ENCODE measurements at regions of chr2 and their contacts with region 1.

Region 1: DNA sequence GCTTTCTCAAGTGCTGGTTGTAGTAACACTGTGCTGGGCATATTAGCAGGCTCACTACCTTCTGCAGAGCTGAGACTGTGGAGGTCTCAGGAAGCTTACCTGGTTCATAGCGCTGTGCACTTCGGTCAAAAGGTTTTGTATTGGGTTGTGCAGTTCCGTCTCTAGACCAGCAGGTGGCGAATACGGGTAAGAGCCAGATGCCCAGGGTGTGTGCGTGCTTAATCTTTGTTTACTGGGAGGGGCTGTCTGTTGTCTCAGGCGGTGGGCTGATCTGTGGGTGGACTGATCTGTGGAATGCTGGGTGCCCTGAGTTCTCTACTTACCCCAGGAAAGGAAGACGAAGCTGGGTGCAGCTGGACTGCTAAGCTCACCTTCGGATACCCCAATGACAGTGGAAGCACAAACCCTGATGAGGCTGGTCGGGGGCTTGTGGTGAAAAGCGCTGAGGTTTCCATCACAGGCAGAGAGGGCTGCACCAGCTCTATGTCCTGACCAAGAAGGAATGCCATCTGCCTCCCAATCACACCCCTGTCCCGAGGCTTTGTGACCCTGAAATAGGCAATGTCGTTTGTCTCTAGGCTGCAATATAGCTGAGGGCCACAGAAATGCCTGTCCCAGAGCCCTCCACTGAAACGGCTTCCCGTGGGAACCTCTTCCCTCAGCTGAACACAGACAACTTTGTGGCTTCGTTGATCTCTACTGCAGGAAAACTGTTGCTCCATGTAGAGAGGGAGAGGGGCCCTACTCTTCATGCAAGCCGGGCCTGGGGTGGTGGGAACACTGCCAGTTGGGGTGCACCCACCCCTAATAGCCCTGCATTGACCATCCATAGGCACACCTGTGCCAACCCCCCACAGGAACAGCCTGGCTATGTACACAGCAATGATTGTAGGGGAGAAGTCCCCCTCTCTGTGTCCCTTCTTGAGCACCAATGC is 45.9 kb upstream of the FAM117B start:
- DNase-seq: peak; percentile 29 to 52
- ATAC-seq: peak; percentile 85 to 94
- H3K4me3 ChIP-seq: peak overlapping the region; percentile 18 to 60 (median 30)
- H3K27ac ChIP-seq: no peak overlapping the region
- H3K4me1 ChIP-seq: peaks cover 0 to 3% of the 10 kb centered on the region in 2 donors
- H3K27me3 ChIP-seq: no peaks in the 10 kb centered on the region
- CTCF ChIP-seq: peak; percentile 65 to 95 (median 89)
- POLR2A ChIP-seq: no peak

Region 2: DNA sequence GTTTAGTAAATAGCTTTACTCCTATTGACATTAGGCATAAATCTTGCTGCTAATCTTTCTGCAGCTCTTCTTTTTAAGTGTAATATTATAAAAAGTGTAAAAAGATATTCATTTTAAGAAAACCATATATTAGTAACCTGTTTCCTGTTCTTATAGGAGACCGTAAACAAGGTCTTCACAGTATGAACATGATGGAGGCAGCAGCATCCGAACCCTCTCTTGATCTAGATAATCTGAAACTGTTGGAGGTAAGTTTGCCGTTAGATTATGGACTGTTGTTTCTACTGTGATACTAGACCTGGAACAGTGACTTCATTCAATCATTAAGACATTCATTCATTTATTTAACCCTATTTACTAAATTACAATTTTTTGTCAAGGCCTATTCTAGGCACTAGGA is 74.2 kb before region 1 on chr2:
- in situ Hi-C with region 1: no loop called
- intact Hi-C with region 1: no loop called
- DNase-seq: no peak
- ATAC-seq: no peak
- H3K4me3 ChIP-seq: no peak overlapping the region
- H3K27ac ChIP-seq: no peak overlapping the region
- H3K4me1 ChIP-seq: no peaks in the 10 kb centered on the region
- H3K27me3 ChIP-seq: no peaks in the 10 kb centered on the region
- CTCF ChIP-seq: no peak
- POLR2A ChIP-seq: no peak

Region 3: GRCh38 chr2:202726070-202726469 is 137.2 kb after region 1 on chr2:
- in situ Hi-C with region 1: no loop called
- intact Hi-C with region 1: loop called (anchors 5 kb)
- DNase-seq: no peak
- ATAC-seq: peak; percentile 74 to 77
- H3K4me3 ChIP-seq: peak overlapping the region in 2 of 4 donors; percentile 18 to 30
- H3K27ac ChIP-seq: peak overlapping the region in 1 of 4 donors; percentile 63
- H3K4me1 ChIP-seq: peaks cover 0 to 6% of the 10 kb centered on the region in 2 donors
- H3K27me3 ChIP-seq: no peaks in the 10 kb centered on the region
- CTCF ChIP-seq: no peak
- POLR2A ChIP-seq: peak in 1 of 2 donors; percentile 38

Region 4: GRCh38 chr2:202870431-202871299 is 281.8 kb after region 1 on chr2:
- in situ Hi-C with region 1: loop called in 1 of 4 experiments (anchors 25 kb)
- intact Hi-C with region 1: loop called (anchors 2 kb)
- DNase-seq: peak; percentile 47 to 74
- ATAC-seq: peak; percentile 78 to 85
- H3K4me3 ChIP-seq: peak overlapping the region; percentile 72 to 88 (median 84)
- H3K27ac ChIP-seq: peak overlapping the region; percentile 73 to 84 (median 79)
- H3K4me1 ChIP-seq: peaks cover 6 to 10% of the 10 kb centered on the region in 2 donors
- H3K27me3 ChIP-seq: no peaks in the 10 kb centered on the region
- CTCF ChIP-seq: no peak
- POLR2A ChIP-seq: peak; percentile 23 to 58

Region 5: GRCh38 chr2:202883987-202884675 is 295.2 kb after region 1 on chr2:
- in situ Hi-C with region 1: loop called in 1 of 4 experiments (anchors 25 kb)
- intact Hi-C with region 1: no loop called
- DNase-seq: no peak
- ATAC-seq: no peak
- H3K4me3 ChIP-seq: no peak overlapping the region
- H3K27ac ChIP-seq: no peak overlapping the region
- H3K4me1 ChIP-seq: no peaks in the 10 kb centered on the region
- H3K27me3 ChIP-seq: no peaks in the 10 kb centered on the region
- CTCF ChIP-seq: no peak
- POLR2A ChIP-seq: no peak